GM18951 (cell line): ENCODE measurements at regions of chr1 and their contacts with region 1.

Region 1: DNA sequence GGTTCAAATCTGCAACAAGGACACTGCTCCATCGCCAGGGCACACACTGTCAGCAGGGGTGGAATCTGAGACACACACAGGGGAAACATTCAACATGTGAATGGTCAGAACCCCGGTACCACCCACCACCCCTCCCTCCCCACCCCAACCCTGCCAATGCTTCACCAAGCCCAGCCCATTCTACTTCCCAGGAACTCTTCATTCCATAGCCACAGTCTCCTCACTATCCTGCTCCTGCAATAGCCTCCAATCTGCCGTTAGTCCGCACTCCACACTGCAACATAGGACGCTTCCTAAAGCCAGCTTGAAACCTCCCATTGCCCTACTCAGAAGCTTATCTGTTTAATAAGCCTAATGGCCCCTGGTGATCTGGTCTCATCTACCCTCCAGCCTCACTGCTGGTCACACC is 7.5 kb upstream of the RAB3B start:
- POLR2A ChIP-seq: no peak

Region 2: GRCh38 chr1:51708911-51709760 is 288.8 kb before region 1 on chr1:
- in situ Hi-C with region 1: no loop called
- POLR2A ChIP-seq: no peak

Region 3: DNA sequence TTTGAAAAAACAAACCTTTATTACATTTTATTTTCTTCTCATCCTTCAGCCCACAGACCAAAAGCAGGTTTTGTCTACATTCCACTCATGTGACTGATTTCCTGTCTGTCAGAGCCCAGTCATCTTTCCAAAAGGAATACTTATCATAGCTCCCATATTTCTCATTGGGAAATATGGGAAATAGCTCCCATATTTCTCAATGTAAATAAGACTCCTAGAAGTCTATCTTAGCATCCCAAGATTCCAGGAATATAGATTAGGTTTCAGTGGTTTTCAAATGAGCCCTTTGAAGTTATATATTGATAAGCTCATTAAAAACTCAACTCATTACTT is 100.3 kb before region 1 on chr1:
- in situ Hi-C with region 1: loop called (anchors 5 kb)
- POLR2A ChIP-seq: no peak

Region 4: GRCh38 chr1:52102336-52103013 is 104.5 kb after region 1 on chr1:
- in situ Hi-C with region 1: no loop called
- POLR2A ChIP-seq: no peak